Dendritic cell treated with granulocyte-macrophage colony-stimulating factor and Interleukin-4, amounts not matched to agents 40 ng/mL and 50 ng/mL, for 4 days (primary cell): ENCODE measurements at regions of chr13 and their contacts with region 1.

Region 1: GRCh38 chr13:52194184-52194868 is 34.9 kb upstream of the NEK3 start:
- H3K4me3 Mint-ChIP-seq: peak overlapping the region; percentile 96
- H3K27ac Mint-ChIP-seq: peak overlapping the region; percentile 93
- H3K4me1 Mint-ChIP-seq: peaks cover 12% of the 10 kb centered on the region
- H3K27me3 Mint-ChIP-seq: no peaks in the 10 kb centered on the region

Region 2: DNA sequence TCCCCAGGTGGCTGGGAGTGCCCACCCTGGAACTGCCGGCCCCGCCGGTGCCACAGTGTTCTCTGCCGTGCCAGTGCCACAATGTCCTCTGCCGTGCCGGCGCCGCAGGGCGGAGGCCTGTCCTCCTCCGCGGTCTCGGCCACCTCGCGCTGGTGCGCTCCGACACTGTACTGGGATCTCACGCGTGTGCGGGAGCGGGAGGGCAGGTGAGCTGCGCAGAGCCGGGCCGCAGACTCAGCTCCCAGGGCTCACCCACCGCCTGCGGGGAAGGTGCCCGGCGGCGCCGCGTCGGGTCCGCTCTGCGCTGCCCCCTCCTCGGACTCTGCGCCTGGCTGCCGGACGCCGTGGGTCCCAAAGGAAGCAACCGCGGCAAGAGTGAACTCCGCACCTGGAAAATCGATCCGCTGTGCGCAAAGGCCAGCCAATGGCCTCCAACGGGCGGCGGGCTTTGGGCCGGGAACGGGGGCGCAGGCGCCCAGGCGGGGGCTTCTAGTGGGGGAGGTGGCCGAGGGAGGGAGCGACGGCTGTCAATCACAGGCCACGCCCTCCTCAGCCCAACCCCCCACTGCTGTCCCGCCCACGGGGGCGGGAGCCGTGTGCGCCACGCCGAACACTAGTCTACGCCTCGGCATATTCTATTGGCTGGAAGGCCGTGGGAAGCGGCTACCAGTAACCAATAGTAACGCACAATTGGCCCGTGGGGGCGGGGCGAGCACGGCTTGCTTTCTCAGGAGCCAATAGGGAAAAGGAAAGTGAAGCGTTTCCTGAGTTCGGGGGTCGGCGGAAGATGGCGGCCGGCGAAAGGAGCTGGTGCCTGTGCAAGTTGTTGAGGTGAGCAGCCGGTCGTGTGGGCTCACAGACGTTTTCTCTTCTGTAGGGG is 182.5 kb before region 1 on chr13 and contains the start of gene ALG11:
- intact Hi-C with region 1: loop called (anchors 5 kb)
- H3K4me3 Mint-ChIP-seq: peak within 1 kb of the TSS; percentile 97
- H3K27ac Mint-ChIP-seq: peak within 1 kb of the TSS; percentile 95
- H3K4me1 Mint-ChIP-seq: peaks cover 16% of the 10 kb centered on the region
- H3K27me3 Mint-ChIP-seq: peaks cover 35% of the 10 kb centered on the region

Region 3: GRCh38 chr13:52048516-52048915 is 145.8 kb before region 1 on chr13:
- intact Hi-C with region 1: no loop called
- H3K4me3 Mint-ChIP-seq: no peak overlapping the region
- H3K27ac Mint-ChIP-seq: no peak overlapping the region
- H3K4me1 Mint-ChIP-seq: no peaks in the 10 kb centered on the region
- H3K27me3 Mint-ChIP-seq: no peaks in the 10 kb centered on the region

Region 4: GRCh38 chr13:52159321-52160086 is 34.8 kb before region 1 on chr13 and contains the start of gene NEK3:
- intact Hi-C with region 1: loop called (anchors 2 kb)
- H3K4me3 Mint-ChIP-seq: peak within 1 kb of the TSS; percentile 83
- H3K27ac Mint-ChIP-seq: peak within 1 kb of the TSS; percentile 99
- H3K4me1 Mint-ChIP-seq: peaks cover 72% of the 10 kb centered on the region
- H3K27me3 Mint-ChIP-seq: no peaks in the 10 kb centered on the region

Region 5: DNA sequence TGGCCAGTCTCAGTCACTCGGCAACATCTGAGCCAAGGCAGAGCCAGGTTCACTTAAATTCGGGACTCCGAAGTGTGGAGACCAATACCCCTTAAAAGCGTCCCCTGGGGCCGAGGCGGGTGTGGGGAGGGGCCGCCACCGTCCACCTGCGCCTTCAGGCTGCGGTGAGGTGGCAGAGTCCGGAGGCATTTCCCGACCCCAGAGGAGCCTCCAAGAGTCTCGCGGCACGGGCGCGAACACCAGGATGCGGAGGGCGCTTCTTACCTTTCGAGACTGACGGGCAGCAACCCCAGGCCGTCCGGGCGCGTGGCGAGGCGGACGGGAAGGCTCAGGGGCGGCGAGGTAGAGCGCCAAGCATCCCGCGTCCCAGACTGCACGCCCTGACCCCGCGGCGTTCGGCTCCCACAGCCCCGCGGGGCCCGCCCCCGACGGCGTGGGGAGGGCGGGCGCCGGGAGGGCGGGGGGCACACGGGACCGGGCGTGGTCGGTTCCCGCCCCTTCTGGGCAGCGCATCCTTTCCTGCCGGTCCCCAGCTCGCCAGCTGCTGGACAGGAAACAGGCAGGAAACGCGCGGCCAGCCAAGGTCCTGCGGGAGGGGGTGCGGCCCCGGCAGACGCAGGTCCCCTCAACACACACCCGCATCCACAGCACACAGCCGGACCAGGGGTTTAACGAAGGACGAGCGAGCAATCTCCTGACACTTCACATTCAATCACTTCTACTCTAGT is 211.6 kb after region 1 on chr13 and contains the start of gene THSD1:
- intact Hi-C with region 1: no loop called
- H3K4me3 Mint-ChIP-seq: peak within 1 kb of the TSS; percentile 57
- H3K27ac Mint-ChIP-seq: no peak within 1 kb of the TSS
- H3K4me1 Mint-ChIP-seq: peaks cover 20% of the 10 kb centered on the region
- H3K27me3 Mint-ChIP-seq: peaks cover 33% of the 10 kb centered on the region